Mammary epithelial cell (primary cell): ENCODE measurements at regions of chr10 and their contacts with region 1.

Region 1: GRCh38 chr10:100760726-100761125 is 15.3 kb downstream of the PAX2 start:
- DNase-seq: no peak
- H3K4me3 ChIP-seq: no peak overlapping the region
- H3K27ac ChIP-seq: no peak overlapping the region
- H3K4me1 ChIP-seq: no peaks in the 10 kb centered on the region
- H3K27me3 ChIP-seq: peaks cover 9% of the 10 kb centered on the region
- CTCF ChIP-seq: no peak

Region 2: DNA sequence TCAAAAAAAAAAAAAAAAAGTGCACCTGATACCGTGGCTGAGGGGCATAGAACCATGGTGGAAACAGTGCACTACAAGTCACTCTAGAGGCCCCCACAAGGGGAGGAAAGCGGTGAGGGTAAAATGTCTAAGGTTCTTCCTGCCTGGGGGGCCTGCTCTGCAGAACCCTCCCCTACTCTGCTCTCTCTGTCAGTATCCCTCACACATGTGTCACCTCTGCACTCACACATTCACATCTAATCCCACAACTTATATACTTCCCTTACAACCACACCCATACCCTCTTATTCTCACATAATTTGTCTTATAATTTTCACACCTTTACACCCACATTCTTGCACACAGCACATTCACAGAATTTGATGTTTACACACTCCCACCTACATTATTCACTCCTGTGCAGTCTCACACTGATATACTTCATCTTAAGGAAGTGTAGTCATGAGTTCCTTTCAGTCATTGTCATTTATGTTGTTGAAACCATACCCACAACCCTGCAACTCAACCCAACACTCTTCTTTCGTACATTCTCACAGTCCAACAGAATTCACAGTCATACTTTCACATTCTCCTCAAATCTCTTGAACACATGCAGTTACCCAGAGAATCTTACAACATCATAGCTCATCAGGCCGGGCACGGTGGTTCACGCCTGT is 83.3 kb before region 1 on chr10:
- CTCF ChIA-PET with region 1: no interaction called
- dilution Hi-C with region 1: loop called (anchors 5 kb)
- in situ Hi-C with region 1: no loop called
- intact Hi-C with region 1: no loop called
- DNase-seq: no peak
- H3K4me3 ChIP-seq: no peak overlapping the region
- H3K27ac ChIP-seq: no peak overlapping the region
- H3K4me1 ChIP-seq: no peaks in the 10 kb centered on the region
- H3K27me3 ChIP-seq: peaks cover 9% of the 10 kb centered on the region
- CTCF ChIP-seq: no peak

Region 3: DNA sequence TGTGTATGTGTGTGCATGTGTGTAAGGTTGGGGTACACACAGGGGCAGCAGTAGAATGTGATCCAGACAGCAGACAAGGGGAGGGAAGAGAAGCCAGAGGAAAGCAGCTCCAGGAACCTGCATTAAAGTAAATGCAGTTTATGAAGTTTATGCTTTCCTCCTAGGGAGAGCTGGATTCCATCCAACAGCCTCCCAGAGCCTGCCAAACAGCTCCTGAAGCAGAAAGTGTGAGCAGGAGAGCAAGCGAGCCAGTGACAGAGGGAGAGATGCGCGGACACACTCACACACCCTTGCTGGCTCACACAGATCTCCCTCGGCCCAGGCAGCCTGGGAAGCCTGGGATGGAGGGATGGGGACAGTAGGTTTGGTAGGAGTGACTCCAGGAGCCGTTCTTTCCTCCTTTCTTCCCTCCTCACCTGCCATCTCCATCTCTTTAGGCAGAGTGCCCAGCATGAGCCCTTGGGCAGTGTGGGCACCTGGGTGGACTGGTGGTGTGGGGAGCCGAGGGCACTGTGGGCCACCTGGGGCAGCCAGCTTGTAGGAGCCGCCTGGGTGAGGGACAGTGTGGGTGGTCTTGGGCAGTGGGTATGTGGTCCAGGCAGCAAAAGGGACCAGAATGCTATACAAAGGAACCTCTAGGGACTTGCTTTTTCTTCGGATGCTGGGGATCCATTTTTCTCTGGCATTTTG is 30.8 kb after region 1 on chr10:
- CTCF ChIA-PET with region 1: no interaction called
- dilution Hi-C with region 1: no loop called
- in situ Hi-C with region 1: no loop called
- intact Hi-C with region 1: no loop called
- DNase-seq: no peak
- H3K4me3 ChIP-seq: no peak overlapping the region
- H3K27ac ChIP-seq: no peak overlapping the region
- H3K4me1 ChIP-seq: no peaks in the 10 kb centered on the region
- H3K27me3 ChIP-seq: peaks cover 4% of the 10 kb centered on the region
- CTCF ChIP-seq: no peak

Region 4: DNA sequence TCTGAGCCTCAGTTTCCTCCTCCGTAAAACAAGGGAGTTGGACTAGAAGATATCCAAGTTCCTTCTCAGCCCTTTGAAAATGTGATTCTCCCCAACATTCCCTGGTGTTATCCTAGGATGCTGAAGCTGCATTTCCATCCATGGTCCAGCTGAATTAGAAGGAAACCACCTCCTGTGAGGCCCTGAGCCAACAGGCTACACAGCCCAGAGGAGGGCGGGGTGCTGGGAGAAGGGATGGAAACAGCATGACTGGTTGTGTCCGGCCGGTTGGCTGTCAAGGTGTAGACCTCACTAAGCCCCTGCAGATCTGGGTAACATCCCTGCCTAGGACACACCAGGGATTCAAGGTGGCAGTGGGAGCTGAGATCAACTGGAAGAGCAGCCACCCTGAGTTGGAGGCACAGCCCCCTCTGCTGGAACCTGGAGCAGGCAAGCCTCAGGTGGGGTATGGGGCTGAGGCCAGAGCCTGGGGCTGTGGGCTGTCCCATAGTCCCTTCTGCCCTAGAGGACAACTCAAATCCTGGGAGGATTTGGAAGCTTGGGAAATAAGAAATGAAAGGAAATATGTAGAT is 56.6 kb after region 1 on chr10:
- CTCF ChIA-PET with region 1: no interaction called
- dilution Hi-C with region 1: loop called (anchors 5 kb)
- in situ Hi-C with region 1: no loop called
- intact Hi-C with region 1: no loop called
- DNase-seq: no peak
- H3K4me3 ChIP-seq: no peak overlapping the region
- H3K27ac ChIP-seq: no peak overlapping the region
- H3K4me1 ChIP-seq: no peaks in the 10 kb centered on the region
- H3K27me3 ChIP-seq: peaks cover 3% of the 10 kb centered on the region
- CTCF ChIP-seq: no peak